ENCODE measurements at regions of chr2 and their contacts with region 1.

Region 1: DNA sequence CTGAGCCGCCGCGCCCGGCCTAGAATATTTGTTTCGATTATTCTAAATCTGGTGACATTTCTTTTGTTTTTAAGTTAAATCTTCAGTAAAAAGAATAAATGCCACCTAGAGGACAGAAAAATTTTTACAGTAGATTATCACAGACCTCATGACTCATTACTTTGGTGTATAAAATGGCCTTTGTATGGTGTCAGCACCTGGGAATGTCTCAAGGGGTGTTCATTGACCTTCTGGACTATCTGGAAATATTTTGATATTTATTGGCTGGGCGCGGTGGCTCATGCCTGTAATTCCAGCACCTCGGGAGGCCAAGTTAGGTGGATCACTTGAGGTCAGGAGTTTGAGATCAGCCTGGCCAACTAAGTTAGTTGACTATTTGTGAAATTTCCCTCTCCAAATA is 30.3 kb upstream of the SLC30A6 start:
- DNase-seq: no peak
- ATAC-seq: peak; percentile 31
- H3K4me3 Mint-ChIP-seq: no peak overlapping the region
- H3K27ac Mint-ChIP-seq: no peak overlapping the region
- H3K4me1 Mint-ChIP-seq: peaks cover 2% of the 10 kb centered on the region
- H3K27me3 Mint-ChIP-seq: no peaks in the 10 kb centered on the region
- CTCF ChIP-seq: no peak

Region 2: DNA sequence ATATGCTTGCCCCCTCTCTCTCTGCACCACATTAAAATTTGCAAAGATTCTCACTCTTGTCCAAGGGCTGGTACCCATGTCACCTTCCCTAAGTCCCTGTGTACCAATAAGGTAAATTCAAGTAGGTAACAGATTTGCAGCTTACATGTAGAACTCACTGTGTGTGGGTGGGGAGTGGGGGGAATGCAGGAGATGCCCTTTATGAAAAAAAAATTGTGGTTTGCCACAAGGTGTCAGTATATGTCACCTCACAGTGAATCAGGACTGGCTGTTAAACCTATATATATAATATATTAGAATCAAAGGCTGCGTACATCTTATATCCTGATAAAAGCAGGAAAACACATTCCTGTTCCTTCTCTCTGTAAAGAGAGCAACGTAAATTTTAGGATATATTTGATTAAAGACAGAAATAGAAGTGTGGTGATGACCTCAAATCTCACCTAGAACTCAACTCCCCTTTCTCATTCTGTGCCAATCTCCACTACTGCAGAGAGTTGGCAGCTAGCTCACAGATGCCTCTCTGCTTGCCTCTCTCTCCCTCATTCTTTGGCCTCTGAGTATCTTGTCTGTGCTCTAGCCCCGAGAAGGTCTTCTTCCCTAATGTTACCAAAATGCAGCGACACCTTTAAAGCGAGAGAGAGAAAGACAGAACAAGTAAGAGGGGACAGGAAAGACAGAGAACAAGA is 721.4 kb before region 1 on chr2:
- CTCF ChIA-PET with region 1: interaction called, 4 read pairs
- POLR2A ChIA-PET with region 1: no interaction called
- intact Hi-C with region 1: loop called (anchors 10 kb)
- DNase-seq: no peak
- ATAC-seq: no peak
- H3K4me3 Mint-ChIP-seq: no peak overlapping the region
- H3K27ac Mint-ChIP-seq: no peak overlapping the region
- H3K4me1 Mint-ChIP-seq: no peaks in the 10 kb centered on the region
- H3K27me3 Mint-ChIP-seq: peaks cover 15% of the 10 kb centered on the region
- CTCF ChIP-seq: no peak

Region 3: GRCh38 chr2:31688282-31688681 is 447.1 kb before region 1 on chr2:
- CTCF ChIA-PET with region 1: no interaction called
- POLR2A ChIA-PET with region 1: no interaction called
- intact Hi-C with region 1: loop called (anchors 2 kb)
- DNase-seq: no peak
- ATAC-seq: no peak
- H3K4me3 Mint-ChIP-seq: no peak overlapping the region
- H3K27ac Mint-ChIP-seq: no peak overlapping the region
- H3K4me1 Mint-ChIP-seq: no peaks in the 10 kb centered on the region
- H3K27me3 Mint-ChIP-seq: peaks cover 6% of the 10 kb centered on the region
- CTCF ChIP-seq: no peak

Region 4: GRCh38 chr2:31886697-31887096 is 248.7 kb before region 1 on chr2:
- CTCF ChIA-PET with region 1: no interaction called
- POLR2A ChIA-PET with region 1: no interaction called
- intact Hi-C with region 1: loop called (anchors 2 kb)
- DNase-seq: no peak
- ATAC-seq: peak; percentile 64
- H3K4me3 Mint-ChIP-seq: no peak overlapping the region
- H3K27ac Mint-ChIP-seq: no peak overlapping the region
- H3K4me1 Mint-ChIP-seq: peaks cover 36% of the 10 kb centered on the region
- H3K27me3 Mint-ChIP-seq: no peaks in the 10 kb centered on the region
- CTCF ChIP-seq: no peak

Measured in activated B cell treated with CpG ODN at 0.5 μM for 24 hours (primary cell).